Activated CD4-positive, alpha-beta T cell treated with anti-CD3 and anti-CD28 coated beads for 36 hours (primary cell): ENCODE measurements at regions of chr13 and their contacts with region 1.

Region 1: DNA sequence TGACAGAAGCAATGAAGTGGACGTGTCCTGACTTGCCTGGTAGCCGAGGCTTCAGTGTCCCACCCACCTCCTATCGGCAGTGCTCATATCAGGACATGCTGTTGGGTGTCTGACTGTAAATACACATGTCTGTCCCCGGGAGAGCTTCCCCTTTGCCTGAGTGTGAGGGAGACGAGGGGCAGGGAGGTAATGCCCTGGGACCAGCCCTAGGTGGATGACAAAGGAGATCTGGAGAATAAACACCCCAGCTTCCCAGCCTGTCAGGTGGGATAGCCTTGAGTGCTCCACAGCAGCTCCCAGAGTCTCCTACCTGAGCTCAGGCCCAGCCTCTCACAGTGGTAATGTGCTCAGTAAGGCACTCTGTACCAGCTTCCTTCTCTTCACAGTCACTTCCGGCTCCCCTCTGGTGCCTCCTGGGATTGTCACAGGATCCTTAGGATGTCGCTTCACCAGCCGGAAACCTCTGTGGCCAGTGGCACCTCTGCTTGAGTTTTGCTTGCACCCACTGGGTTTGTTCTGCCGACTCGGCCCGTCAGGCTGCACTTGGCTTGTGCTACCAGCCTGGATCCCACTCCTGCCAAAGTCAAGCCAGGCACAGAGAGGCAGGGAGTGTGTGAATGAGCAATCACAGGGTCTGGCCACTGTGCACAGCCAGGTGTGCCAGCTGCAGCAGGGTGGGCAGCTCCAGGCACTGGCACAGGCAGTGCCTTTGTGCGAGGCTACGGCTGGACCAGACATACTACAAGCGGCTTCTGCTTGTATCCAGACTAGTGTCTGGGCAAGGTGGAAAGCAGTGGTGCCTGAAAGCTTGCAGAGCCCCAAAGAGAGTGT is 54.5 kb upstream of the RGCC start:
- DNase-seq: peak; percentile 27
- ATAC-seq: peak; percentile 20
- H3K4me3 Mint-ChIP-seq: no peak overlapping the region
- H3K27ac Mint-ChIP-seq: no peak overlapping the region
- H3K4me1 Mint-ChIP-seq: no peaks in the 10 kb centered on the region
- H3K27me3 Mint-ChIP-seq: no peaks in the 10 kb centered on the region

Region 2: GRCh38 chr13:41428155-41428554 is 25.3 kb after region 1 on chr13:
- CTCF ChIA-PET with region 1: no interaction called
- POLR2A ChIA-PET with region 1: no interaction called
- intact Hi-C with region 1: loop called in 1 of 2 experiments (anchors 2 kb)
- DNase-seq: peak; percentile 65
- ATAC-seq: peak; percentile 75
- H3K4me3 Mint-ChIP-seq: no peak overlapping the region
- H3K27ac Mint-ChIP-seq: no peak overlapping the region
- H3K4me1 Mint-ChIP-seq: peaks cover 6% of the 10 kb centered on the region
- H3K27me3 Mint-ChIP-seq: peaks cover 3% of the 10 kb centered on the region